ENCODE measurements at regions of chr3 and their contacts with region 1.

Region 1: GRCh38 chr3:9890249-9891071 is at the start of gene JAGN1:
- DNase-seq: peak; percentile 84
- H3K4me3 ChIP-seq: peak within 1 kb of the TSS; percentile 65 to 96 (median 90)
- H3K27ac ChIP-seq: peak within 1 kb of the TSS; percentile 94
- H3K4me1 ChIP-seq: peaks cover 16% of the 10 kb centered on the region
- H3K27me3 ChIP-seq: no peaks in the 10 kb centered on the region
- CTCF ChIP-seq: no peak
- total RNA-seq, gene JAGN1: 32.3 to 34.7 TPM

Region 2: GRCh38 chr3:9809615-9810432 is 80.6 kb before region 1 on chr3 and contains the start of gene TTLL3:
- CTCF ChIA-PET with region 1: no interaction called
- dilution Hi-C with region 1: no loop called
- in situ Hi-C with region 1: no loop called
- intact Hi-C with region 1: no loop called
- DNase-seq: peak; percentile 38
- H3K4me3 ChIP-seq: peak within 1 kb of the TSS; percentile 32 to 68 (median 49)
- H3K27ac ChIP-seq: peak within 1 kb of the TSS; percentile 49
- H3K4me1 ChIP-seq: peaks cover 9% of the 10 kb centered on the region
- H3K27me3 ChIP-seq: no peaks in the 10 kb centered on the region
- CTCF ChIP-seq: no peak
- total RNA-seq, gene TTLL3: 15.8 to 33.3 TPM

Region 3: DNA sequence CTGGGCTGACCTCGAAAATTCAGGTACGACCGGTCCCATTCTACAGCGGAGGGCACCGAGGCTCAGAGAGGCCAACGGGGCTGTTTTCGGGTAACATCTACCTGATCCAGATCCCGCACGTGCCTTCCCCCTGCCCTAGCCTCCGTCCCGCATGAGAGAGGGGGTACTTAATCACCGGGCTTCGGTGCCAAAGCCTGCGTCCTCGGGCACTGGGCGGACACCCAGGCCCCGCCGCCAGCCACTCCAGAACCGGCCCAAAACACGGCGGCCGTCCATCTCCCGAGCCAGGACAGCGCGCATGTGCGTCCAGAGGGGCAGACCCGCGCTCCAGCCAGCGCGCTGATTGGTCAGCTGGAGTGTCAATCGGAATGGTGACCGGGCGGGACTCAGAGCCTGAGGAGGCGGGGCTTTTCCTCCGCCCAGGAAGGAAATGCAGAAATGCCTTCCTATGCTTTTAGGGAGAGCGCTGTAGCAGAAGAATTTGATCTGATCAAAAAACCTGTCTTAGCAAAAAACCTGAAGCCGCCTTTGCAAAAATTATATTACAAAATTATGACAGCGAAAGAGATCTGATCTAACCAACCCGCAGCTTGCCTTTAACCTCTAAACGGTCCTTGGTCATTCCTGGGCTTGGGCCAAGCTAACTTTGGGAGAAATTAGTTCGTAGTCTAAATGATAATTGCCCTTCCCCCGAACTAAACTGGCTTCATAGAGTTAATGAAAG is 46.6 kb before region 1 on chr3 and contains the start of gene RPUSD3:
- CTCF ChIA-PET with region 1: interaction called, 12 read pairs
- dilution Hi-C with region 1: no loop called
- in situ Hi-C with region 1: no loop called
- intact Hi-C with region 1: loop called (anchors 2 kb)
- DNase-seq: peak; percentile 92
- H3K4me3 ChIP-seq: peak within 1 kb of the TSS; percentile 62 to 68 (median 67)
- H3K27ac ChIP-seq: peak within 1 kb of the TSS; percentile 29
- H3K4me1 ChIP-seq: peaks cover 16% of the 10 kb centered on the region
- H3K27me3 ChIP-seq: no peaks in the 10 kb centered on the region
- CTCF ChIP-seq: no peak
- total RNA-seq, gene RPUSD3: 35.0 to 40.8 TPM

Region 4: GRCh38 chr3:9852549-9852948 is 37.9 kb before region 1 on chr3:
- CTCF ChIA-PET with region 1: interaction called, 12 read pairs
- dilution Hi-C with region 1: no loop called
- in situ Hi-C with region 1: no loop called
- intact Hi-C with region 1: loop called (anchors 2 kb)
- DNase-seq: no peak
- H3K4me3 ChIP-seq: no peak overlapping the region
- H3K27ac ChIP-seq: no peak overlapping the region
- H3K4me1 ChIP-seq: peaks cover 5% of the 10 kb centered on the region
- H3K27me3 ChIP-seq: no peaks in the 10 kb centered on the region
- CTCF ChIP-seq: peak in 1 of 2 donors; percentile 24

Region 5: GRCh38 chr3:9862391-9863057 is 27.9 kb before region 1 on chr3:
- CTCF ChIA-PET with region 1: interaction called, 12 read pairs
- dilution Hi-C with region 1: no loop called
- in situ Hi-C with region 1: no loop called
- intact Hi-C with region 1: no loop called
- DNase-seq: no peak
- H3K4me3 ChIP-seq: no peak overlapping the region
- H3K27ac ChIP-seq: no peak overlapping the region
- H3K4me1 ChIP-seq: peaks cover 23% of the 10 kb centered on the region
- H3K27me3 ChIP-seq: no peaks in the 10 kb centered on the region
- CTCF ChIP-seq: no peak

Region 6: DNA sequence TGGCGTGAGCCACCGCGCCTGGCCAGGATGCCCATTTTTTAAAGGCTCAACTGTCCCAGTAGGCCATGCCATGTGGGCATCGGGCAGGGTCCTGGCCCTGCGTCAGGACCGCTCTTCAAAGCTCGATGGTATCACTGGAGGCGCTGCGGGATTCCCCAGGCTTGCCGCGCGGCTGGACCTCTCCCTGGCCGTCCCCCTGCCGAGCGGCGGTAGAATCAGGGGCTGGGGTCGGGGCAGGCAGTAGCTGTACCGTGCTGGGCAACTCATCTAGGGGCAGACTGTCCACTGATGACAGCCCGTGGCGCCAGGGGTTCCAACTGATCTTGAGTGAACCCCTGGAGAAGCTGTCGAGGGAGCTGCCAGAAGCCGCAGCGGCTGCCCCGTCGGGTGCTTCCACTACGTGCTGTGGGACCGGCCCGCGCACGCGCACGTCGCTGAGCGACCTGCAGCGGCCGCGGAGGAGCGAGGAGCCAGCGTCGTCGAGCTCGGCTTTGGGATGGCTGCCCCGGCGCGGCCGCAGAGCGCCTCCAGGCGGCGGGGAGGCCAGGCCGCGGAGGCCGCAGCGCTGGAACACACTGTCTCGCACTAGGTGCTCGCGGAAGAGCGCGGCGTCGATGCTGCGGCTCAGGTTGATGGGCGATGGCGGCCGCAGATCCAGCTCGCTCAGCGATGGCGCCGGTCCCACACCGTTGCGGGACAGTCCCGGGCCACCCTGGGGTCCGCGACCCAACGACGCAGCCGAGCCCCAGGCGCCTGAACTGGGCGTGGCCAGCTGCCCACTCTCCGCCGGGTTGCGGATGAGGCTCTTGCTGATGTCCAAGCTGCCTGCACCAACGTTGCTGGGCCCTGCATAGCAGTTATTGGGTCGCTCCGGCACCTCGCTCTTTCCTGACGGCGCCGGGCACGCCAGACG is 55.9 kb after region 1 on chr3:
- CTCF ChIA-PET with region 1: no interaction called
- dilution Hi-C with region 1: no loop called
- in situ Hi-C with region 1: no loop called
- intact Hi-C with region 1: no loop called
- DNase-seq: peak; percentile 79
- H3K4me3 ChIP-seq: peak overlapping the region; percentile 43 to 56 (median 52)
- H3K27ac ChIP-seq: no peak overlapping the region
- H3K4me1 ChIP-seq: peaks cover 10% of the 10 kb centered on the region
- H3K27me3 ChIP-seq: no peaks in the 10 kb centered on the region
- CTCF ChIP-seq: peak; percentile 64 to 78

Region 7: DNA sequence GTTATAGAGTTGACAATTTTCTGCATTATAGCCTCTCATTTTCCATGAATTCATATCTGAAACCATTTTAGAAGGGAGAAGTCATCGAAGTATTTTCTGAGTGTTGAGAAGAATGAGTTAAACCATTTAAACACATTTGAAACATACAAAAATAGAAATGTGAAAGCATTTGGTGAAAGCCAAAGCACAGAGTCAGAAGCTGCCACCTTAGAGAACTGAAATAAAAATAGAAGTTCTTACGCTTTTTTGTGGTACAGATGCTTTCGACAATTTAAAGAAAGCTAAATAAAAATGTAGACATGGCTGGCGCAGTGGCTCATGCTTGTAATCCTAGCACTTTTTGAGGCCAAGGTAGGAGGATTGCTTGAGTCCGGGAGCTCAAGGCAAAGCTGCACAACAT is 208.6 kb after region 1 on chr3:
- CTCF ChIA-PET with region 1: no interaction called
- dilution Hi-C with region 1: no loop called
- in situ Hi-C with region 1: no loop called
- intact Hi-C with region 1: no loop called
- DNase-seq: no peak
- H3K4me3 ChIP-seq: no peak overlapping the region
- H3K27ac ChIP-seq: no peak overlapping the region
- H3K4me1 ChIP-seq: no peaks in the 10 kb centered on the region
- H3K27me3 ChIP-seq: no peaks in the 10 kb centered on the region
- CTCF ChIP-seq: no peak